Activated T-helper 2 cell treated with anti-CD3 and anti-CD28 coated beads, Interferon-gamma antibody, Interleukin-2, Interleukin-4, amounts not matched to agents 10 μg/mL and 5 μg/mL and 100 μg/mL, durations not matched to agents 14 hours and 24 hours and 36 hours (primary cell): ENCODE measurements at regions of chr18 and their contacts with region 1.

Region 1: GRCh38 chr18:12420831-12421421 is 13.2 kb downstream of the PRELID3A start:
- DNase-seq: no peak
- H3K4me3 Mint-ChIP-seq: peak overlapping the region; percentile 72
- H3K27ac Mint-ChIP-seq: peak overlapping the region; percentile 14
- H3K4me1 Mint-ChIP-seq: peaks cover 2% of the 10 kb centered on the region
- H3K27me3 Mint-ChIP-seq: no peaks in the 10 kb centered on the region

Region 2: DNA sequence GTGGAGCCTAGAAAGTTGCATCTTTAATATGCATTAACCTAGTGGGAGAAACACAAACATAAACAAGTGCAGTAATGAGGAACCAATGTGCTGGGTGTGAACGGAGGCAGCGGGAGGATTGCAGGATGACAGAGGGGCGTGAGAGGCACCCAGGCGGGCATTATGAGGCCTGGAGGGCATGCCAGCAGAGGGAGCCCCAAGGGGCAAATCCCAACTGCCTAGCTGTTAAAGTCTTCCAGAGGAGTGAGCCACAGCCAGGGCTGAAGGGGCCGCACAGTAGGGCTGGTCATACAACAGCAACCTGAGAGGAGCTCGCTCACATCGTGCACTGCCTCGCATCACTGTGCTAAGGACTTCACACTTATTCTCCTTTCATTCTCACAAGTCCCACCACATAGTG is 26.5 kb before region 1 on chr18:
- intact Hi-C with region 1: no loop called
- DNase-seq: no peak
- H3K4me3 Mint-ChIP-seq: no peak overlapping the region
- H3K27ac Mint-ChIP-seq: no peak overlapping the region
- H3K4me1 Mint-ChIP-seq: no peaks in the 10 kb centered on the region
- H3K27me3 Mint-ChIP-seq: peaks cover 9% of the 10 kb centered on the region

Region 3: GRCh38 chr18:12408247-12408869 is 12.6 kb before region 1 on chr18:
- intact Hi-C with region 1: loop called (anchors 2 kb)
- DNase-seq: no peak
- H3K4me3 Mint-ChIP-seq: peak overlapping the region; percentile 74
- H3K27ac Mint-ChIP-seq: peak overlapping the region; percentile 21
- H3K4me1 Mint-ChIP-seq: peaks cover 29% of the 10 kb centered on the region
- H3K27me3 Mint-ChIP-seq: peaks cover 32% of the 10 kb centered on the region